Posterior cingulate gyrus (tissue), 11 donors: ENCODE measurements at regions of chr10 and their contacts with region 1.

Region 1: GRCh38 chr10:119892188-119893065 is at the start of gene SEC23IP:
- DNase-seq: peak; percentile 98 to 100 (median 99)

Region 2: DNA sequence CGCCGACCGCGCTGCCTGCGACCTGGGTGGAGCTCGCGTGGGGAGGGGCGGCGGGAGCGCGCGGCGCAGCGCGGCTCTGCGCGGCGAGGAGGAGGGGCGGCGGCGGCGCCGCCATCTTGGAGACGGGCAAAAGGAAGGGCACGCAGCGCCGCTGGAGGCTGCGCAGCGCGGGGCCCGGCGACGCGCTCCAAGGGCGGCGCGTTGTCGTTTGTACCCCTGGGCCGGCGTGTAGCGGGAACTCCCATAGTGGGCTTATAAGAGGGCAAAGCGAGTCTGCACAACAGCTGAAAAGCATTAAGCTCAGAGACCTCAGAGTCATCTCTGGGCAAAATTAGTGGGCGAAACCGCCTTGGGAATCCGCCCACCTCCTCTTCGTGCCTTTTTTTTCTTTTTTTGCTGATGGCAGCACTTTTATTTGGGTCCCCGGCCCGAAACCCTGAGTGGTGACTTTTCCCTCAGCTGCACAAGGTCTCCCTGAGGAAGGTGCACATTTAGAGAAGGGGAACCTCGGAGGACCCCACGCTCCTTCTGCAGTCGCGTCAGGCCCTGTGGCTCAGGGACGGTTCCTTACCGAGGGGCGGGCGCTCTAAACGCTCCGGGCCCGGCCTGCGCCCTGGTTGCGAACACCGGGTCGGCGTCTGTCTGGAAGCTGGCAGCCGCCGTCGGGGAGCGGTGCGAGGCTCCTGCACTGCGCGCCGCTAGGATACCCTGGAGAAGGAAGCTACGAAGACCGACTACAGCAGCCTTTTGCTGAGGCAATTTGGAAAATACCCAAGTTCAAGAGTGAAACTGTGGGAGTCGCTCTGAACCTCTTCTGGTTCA is 19.4 kb before region 1 on chr10:
- intact Hi-C with region 1: loop called (anchors 1 kb)
- DNase-seq: peak; percentile 80 to 98 (median 85)